Activated CD4-positive, alpha-beta T cell treated with anti-CD3 and anti-CD28 coated beads, Interleukin-2, amount 10 ng/mL, durations not matched to agents 24 days and 14 days (primary cell): ENCODE measurements at regions of chr2 and their contacts with region 1.

Region 1: DNA sequence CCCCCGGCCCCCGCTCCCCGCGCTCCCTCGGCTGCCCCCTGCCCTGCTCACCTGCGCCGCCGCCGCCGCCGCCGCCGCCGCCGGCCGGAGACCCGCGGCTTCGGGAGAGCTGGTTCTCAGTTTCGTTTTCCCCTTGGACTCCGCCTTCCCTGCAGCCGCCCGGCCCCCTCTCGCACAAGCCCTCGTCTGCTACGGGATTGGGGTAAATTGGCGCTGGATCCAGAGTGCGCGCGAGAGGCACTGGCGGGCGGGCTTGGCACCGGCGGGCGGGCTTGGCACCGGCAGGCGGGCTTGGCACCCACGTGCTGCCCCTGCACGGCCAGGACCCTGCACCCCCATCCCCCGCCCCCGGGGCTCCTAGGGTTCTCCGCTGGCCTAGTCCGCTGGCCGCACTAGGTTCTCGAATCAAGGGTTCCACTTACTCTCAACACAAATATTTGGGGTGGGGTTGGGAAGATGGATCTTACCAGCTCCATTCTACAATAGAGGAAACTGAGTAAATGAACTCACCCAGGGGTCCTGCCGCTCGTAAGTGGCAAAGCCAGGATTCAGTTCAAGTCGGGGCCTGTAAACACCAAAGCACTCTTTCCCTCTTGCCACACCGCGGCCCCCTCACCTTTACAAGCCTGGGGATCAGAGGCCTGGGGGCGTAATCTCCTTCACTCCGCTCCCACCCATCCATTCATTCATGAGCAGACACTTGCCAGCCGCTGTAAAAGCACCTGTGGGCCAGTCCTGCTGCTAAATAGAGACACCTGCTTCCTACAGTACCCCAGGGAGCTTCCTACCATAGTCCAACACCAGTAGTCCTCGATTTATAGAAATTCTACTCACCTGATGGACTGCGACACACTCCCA is at the start of gene EIF2AK2:
- DNase-seq: peak; percentile 96
- H3K4me3 Mint-ChIP-seq: peak within 1 kb of the TSS; percentile 92
- H3K27ac Mint-ChIP-seq: peak within 1 kb of the TSS; percentile 92
- H3K4me1 Mint-ChIP-seq: peaks cover 40% of the 10 kb centered on the region
- H3K27me3 Mint-ChIP-seq: peaks cover 2% of the 10 kb centered on the region
- total RNA-seq, gene EIF2AK2: 44.5 and 46.7 TPM in 2 replicates

Region 2: GRCh38 chr2:36966370-36967235 is 190.5 kb before region 1 on chr2 and contains the start of gene STRN:
- intact Hi-C with region 1: loop called (anchors 5 kb)
- DNase-seq: peak; percentile 100
- H3K4me3 Mint-ChIP-seq: peak within 1 kb of the TSS; percentile 95
- H3K27ac Mint-ChIP-seq: peak within 1 kb of the TSS; percentile 92
- H3K4me1 Mint-ChIP-seq: peaks cover 46% of the 10 kb centered on the region
- H3K27me3 Mint-ChIP-seq: peaks cover 2% of the 10 kb centered on the region
- total RNA-seq, gene STRN: 27.0 and 28.0 TPM in 2 replicates

Region 3: GRCh38 chr2:36982467-36982866 is 174.6 kb before region 1 on chr2:
- intact Hi-C with region 1: no loop called
- DNase-seq: no peak
- H3K4me3 Mint-ChIP-seq: no peak overlapping the region
- H3K27ac Mint-ChIP-seq: no peak overlapping the region
- H3K4me1 Mint-ChIP-seq: no peaks in the 10 kb centered on the region
- H3K27me3 Mint-ChIP-seq: no peaks in the 10 kb centered on the region

Region 4: GRCh38 chr2:37083873-37084794 is 73.0 kb before region 1 on chr2 and contains the starts of genes GPATCH11 and HEATR5B:
- intact Hi-C with region 1: loop called (anchors 5 kb)
- DNase-seq: peak; percentile 98
- H3K4me3 Mint-ChIP-seq: no peak within 1 kb of the TSS
- H3K27ac Mint-ChIP-seq: no peak within 1 kb of the TSS
- H3K4me1 Mint-ChIP-seq: peaks cover 36% of the 10 kb centered on the region
- H3K27me3 Mint-ChIP-seq: no peaks in the 10 kb centered on the region
- total RNA-seq, gene GPATCH11: 13.8 and 15.7 TPM in 2 replicates
- total RNA-seq, gene HEATR5B: 14.7 and 14.8 TPM in 2 replicates

Region 5: DNA sequence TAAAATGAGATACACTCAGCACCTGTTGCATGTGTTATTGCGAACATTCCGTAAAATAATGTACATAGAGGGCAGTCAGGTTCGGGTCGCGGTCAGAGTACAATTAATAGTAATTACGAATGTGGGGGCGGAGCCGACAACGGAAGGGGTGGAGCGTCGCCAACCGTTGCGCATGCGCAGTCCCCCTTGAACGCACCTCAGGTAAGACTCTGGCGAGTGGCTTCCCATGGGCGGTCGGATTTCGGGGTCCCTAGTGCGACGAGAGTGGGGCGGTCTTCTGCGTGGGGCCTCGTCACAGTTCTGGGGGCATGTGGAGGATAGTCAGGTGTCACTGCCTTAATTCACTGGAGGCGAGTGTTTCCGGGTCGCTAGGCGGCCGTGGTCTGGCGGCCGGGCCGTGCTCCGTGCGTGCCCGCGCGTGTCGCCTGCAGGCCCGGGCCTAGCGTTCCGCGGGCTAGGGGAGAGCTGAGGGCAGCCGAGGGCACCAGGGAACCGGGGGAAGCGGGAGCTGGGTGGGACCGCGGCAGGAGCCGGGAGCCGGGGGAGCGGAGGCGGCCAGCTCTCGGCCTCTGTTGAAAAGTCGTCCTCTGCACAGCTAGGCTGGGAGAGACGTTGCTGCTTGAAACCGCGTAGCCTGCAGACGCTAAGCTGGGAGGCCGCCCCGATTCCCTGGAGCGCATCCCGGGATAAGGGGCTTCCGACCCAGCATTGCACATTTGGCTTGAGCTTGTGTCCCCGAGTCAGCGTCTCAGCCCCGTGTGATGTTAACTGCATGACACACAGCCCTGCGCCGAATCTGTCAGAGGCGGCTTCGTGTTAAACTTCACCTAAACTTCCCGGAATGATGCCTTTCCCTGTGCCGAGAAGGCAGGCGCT is 39.5 kb after region 1 on chr2 and contains the start of gene CEBPZOS:
- intact Hi-C with region 1: loop called (anchors 1 kb)
- DNase-seq: peak; percentile 96
- H3K4me3 Mint-ChIP-seq: peak within 1 kb of the TSS; percentile 92
- H3K27ac Mint-ChIP-seq: peak within 1 kb of the TSS; percentile 98
- H3K4me1 Mint-ChIP-seq: peaks cover 19% of the 10 kb centered on the region
- H3K27me3 Mint-ChIP-seq: peaks cover 3% of the 10 kb centered on the region
- total RNA-seq, gene CEBPZOS: 43.4 and 46.6 TPM in 2 replicates

Region 6: DNA sequence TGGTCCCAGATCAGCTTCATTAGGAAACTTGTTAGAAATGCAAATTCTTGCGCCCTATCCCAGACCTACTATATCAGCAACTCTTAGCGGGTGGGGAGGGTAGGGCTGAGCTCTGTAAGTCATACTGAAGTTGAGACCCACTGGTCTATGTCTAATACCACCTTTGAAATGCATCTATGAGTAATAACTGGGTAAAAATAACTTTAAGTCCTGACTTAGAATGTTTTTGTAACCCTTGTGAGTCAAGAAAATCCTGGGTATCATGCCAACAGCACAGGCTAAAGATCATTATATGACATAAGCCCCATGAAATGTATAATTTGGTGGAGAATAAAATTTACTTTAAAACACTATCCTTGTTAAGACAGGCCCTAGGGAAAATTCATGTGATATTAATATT is 126.1 kb after region 1 on chr2:
- intact Hi-C with region 1: loop called (anchors 5 kb)
- DNase-seq: no peak
- H3K4me3 Mint-ChIP-seq: no peak overlapping the region
- H3K27ac Mint-ChIP-seq: no peak overlapping the region
- H3K4me1 Mint-ChIP-seq: peaks cover 2% of the 10 kb centered on the region
- H3K27me3 Mint-ChIP-seq: no peaks in the 10 kb centered on the region